ENCODE measurements at regions of chr18 and their contacts with region 1.

Region 1: GRCh38 chr18:50853863-50854271 is 25.1 kb upstream of the ME2 start:
- H3K4me3 Mint-ChIP-seq: no peak overlapping the region
- H3K27ac Mint-ChIP-seq: peak overlapping the region; percentile 82
- H3K4me1 Mint-ChIP-seq: peaks cover 82% of the 10 kb centered on the region
- H3K27me3 Mint-ChIP-seq: no peaks in the 10 kb centered on the region

Region 2: DNA sequence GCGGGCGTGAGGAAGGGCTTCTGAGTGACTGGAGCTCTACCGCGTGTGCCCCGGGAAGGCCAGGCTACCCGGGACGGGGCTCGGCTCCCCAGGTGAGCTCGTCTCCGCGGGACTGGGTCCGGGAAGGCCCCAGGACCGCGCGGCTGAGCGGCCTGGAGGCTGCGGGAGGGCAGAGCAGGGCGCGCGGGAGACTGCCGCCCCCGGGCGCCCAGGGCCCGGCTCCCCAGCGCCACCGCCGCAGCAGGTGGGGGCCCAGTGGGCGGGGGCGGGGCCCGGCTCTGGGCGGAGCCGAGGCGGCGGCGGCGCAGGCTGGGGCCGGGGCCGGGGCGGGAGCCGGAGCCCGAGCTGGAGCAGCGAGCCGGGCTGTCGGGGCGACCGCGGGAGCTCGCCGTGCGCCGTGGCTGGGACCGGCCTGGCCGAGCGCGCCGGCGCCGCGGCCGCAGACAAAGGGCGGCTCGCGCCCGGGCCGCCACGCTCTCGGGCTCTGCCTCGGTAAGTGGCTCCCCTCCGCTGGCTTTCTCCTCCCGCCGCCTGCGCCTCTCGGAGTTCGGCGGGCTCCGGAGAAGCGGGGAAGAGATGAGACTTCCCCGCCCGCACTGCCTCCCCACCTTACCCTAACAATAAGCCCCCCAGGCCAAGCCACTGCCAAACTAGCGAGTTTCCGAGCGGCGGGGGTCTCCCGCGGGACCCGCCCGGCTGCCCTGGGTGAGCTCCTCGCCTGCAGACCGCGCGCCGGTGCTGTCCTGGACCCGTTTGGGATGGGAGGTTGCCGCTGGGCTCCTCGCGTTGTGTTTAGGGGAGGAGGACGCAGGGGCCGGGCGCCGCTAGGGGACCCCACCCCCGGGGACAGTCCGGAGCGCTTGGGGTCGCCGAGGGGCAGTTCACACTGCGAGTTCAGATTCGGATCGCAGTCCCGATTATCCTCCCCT is 293.9 kb before region 1 on chr18 and contains the start of gene MAPK4:
- intact Hi-C with region 1: no loop called
- H3K4me3 Mint-ChIP-seq: no peak within 1 kb of the TSS
- H3K27ac Mint-ChIP-seq: no peak within 1 kb of the TSS
- H3K4me1 Mint-ChIP-seq: no peaks in the 10 kb centered on the region
- H3K27me3 Mint-ChIP-seq: peaks cover 66% of the 10 kb centered on the region

Region 3: GRCh38 chr18:50751490-50751889 is 102.4 kb before region 1 on chr18:
- intact Hi-C with region 1: no loop called
- H3K4me3 Mint-ChIP-seq: no peak overlapping the region
- H3K27ac Mint-ChIP-seq: no peak overlapping the region
- H3K4me1 Mint-ChIP-seq: no peaks in the 10 kb centered on the region
- H3K27me3 Mint-ChIP-seq: peaks cover 10% of the 10 kb centered on the region

Region 4: GRCh38 chr18:50836521-50836957 is 17.3 kb before region 1 on chr18:
- intact Hi-C with region 1: loop called (anchors 2 kb)
- H3K4me3 Mint-ChIP-seq: peak overlapping the region; percentile 5
- H3K27ac Mint-ChIP-seq: peak overlapping the region; percentile 77
- H3K4me1 Mint-ChIP-seq: peaks cover 35% of the 10 kb centered on the region
- H3K27me3 Mint-ChIP-seq: no peaks in the 10 kb centered on the region

Region 5: GRCh38 chr18:50878345-50879301 is 24.8 kb after region 1 on chr18 and contains the start of gene ME2:
- intact Hi-C with region 1: loop called (anchors 2 kb)
- H3K4me3 Mint-ChIP-seq: peak within 1 kb of the TSS; percentile 98
- H3K27ac Mint-ChIP-seq: peak within 1 kb of the TSS; percentile 98
- H3K4me1 Mint-ChIP-seq: peaks cover 27% of the 10 kb centered on the region
- H3K27me3 Mint-ChIP-seq: no peaks in the 10 kb centered on the region

Region 6: DNA sequence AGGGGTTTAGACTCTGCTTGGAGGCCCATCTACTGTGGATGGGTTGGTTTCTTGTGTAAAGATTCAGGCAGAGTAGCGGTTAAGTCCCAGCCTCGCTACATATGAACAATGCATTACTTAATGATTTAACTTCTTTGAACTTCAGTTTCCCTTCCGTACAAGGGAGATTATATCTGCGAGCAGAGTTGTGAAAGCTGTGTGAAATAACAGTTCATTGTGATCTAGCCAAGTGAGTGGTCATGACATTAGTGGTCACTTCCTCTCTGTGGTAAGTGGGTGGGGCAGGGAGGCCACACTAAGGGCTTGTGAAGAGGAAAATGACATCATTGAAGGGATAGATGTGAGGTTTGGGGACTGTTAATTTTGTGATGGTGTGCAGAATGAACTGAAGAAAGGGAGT is 357.7 kb after region 1 on chr18:
- intact Hi-C with region 1: no loop called
- H3K4me3 Mint-ChIP-seq: peak overlapping the region; percentile 27
- H3K27ac Mint-ChIP-seq: peak overlapping the region; percentile 15
- H3K4me1 Mint-ChIP-seq: peaks cover 30% of the 10 kb centered on the region
- H3K27me3 Mint-ChIP-seq: peaks cover 1% of the 10 kb centered on the region